Aorta (tissue), 5 donors: ENCODE measurements at regions of chr19 and their contacts with region 1.

Region 1: GRCh38 chr19:35995048-35995993 is at the start of gene SDHAF1:
- DNase-seq: peak; percentile 98 to 99
- ATAC-seq: peak; percentile 95
- H3K4me3 ChIP-seq: peak within 1 kb of the TSS; percentile 76
- H3K27ac ChIP-seq: peak within 1 kb of the TSS in 1 of 2 donors; percentile 45
- H3K4me1 ChIP-seq: no peaks in the 10 kb centered on the region
- H3K27me3 ChIP-seq: no peaks in the 10 kb centered on the region
- total RNA-seq, gene SDHAF1: 11.6 to 16.6 TPM

Region 2: GRCh38 chr19:35949131-35949530 is 46.2 kb before region 1 on chr19:
- intact Hi-C with region 1: no loop called
- DNase-seq: no peak
- ATAC-seq: no peak
- H3K4me3 ChIP-seq: no peak overlapping the region
- H3K27ac ChIP-seq: no peak overlapping the region
- H3K4me1 ChIP-seq: no peaks in the 10 kb centered on the region
- H3K27me3 ChIP-seq: no peaks in the 10 kb centered on the region

Region 3: DNA sequence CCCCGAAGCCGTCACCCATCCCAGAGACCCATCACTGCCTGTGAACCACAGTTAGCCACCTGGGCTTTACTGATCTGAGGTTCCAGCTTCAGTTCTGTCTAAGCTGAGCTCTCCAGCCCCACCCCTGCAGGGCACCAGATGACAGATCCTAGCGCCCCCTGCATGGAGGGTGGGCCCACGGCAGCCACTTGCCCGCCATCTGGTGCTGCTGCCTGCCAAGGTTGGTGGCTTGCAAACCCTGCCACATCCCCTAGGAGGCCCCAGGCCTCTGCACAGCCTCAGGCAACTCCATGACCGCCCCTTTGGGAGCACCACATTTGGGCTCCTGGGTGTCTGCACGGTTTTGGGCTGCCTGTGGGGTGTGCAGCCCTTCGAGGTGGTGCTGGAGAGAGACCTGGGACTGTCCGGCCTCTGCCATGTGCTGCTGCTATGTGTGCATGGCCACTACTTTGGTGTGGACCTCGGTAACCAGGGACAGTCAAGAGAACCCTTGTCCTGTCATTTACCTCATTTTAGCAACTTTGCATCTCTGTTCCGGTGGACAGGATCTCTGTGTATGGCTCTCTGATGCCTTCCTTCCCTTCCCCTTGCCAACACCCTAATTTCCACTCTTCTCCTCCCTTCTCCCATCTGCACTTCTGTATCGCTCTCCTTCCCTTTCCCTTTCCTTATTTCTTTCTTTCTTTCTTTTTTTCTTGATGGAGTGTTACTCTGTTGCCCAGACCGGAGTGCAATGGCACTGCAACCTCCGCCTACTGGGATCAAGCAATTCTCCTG is 17.7 kb before region 1 on chr19:
- intact Hi-C with region 1: no loop called
- DNase-seq: no peak
- ATAC-seq: no peak
- H3K4me3 ChIP-seq: no peak overlapping the region
- H3K27ac ChIP-seq: no peak overlapping the region
- H3K4me1 ChIP-seq: no peaks in the 10 kb centered on the region
- H3K27me3 ChIP-seq: no peaks in the 10 kb centered on the region

Region 4: DNA sequence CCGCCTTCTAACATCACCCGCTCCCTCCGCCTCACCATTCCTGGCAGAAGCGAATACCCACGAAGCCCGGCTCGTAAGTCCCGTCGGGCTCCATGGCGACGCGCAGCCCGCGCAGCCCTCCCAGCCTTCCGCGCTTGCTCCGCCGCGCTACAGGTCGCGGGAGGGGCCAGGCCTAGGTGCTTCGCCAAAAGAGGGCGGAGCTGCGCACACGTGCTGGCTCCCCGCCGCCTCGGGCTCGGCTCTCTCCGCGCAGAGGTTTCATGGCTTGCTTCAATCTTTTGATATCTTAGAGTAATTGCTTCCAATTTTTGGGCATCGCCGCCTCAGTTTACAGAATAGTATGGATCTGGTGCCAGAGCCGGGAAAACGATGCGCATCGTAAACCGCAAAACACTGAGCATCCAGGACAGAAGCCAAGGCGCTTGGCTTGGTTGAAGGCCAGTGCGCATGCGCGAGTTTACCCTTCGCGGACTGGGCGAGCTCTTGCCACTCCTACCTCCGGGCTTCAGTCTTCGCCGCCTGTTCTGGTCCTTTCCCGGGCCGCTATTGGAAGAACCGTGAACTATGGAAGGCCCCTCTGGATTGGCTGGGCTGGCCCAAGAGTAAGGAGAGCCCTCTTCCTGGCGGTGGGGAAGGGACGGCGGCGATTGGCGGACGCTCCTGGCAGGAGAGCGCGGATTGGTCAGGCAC is 119.6 kb after region 1 on chr19 and contains the start of gene POLR2I:
- intact Hi-C with region 1: loop called in 1 of 2 experiments (anchors 5 kb)
- DNase-seq: peak; percentile 100
- ATAC-seq: peak; percentile 98
- H3K4me3 ChIP-seq: peak within 1 kb of the TSS; percentile 48 to 50
- H3K27ac ChIP-seq: peak within 1 kb of the TSS in 1 of 2 donors; percentile 61
- H3K4me1 ChIP-seq: no peaks in the 10 kb centered on the region
- H3K27me3 ChIP-seq: no peaks in the 10 kb centered on the region
- total RNA-seq, gene POLR2I: 33.7 to 48.1 TPM